ENCODE measurements at regions of chr5 and their contacts with region 1.

Region 1: DNA sequence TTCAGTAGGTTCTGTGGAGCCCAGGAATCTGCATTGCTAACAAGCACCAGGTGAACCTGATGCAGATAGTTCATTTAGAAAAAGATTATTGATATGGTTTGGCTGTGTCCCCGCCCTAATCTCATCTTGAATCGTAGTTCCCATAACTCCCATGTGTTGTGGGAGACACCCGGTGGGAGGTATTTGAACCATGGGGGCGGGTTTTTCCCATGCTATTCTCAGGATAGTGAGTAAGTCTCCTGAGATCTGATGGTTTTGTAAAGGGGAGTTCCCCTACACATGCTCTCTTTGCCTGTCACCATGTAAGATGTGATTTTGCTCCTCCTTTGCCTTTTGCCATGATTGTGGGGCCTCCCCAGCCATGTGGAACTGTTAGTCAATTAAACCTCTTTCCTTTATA is 212.0 kb downstream of the RAB3C start:
- DNase-seq: no peak
- H3K4me3 Mint-ChIP-seq: no peak overlapping the region
- H3K27ac Mint-ChIP-seq: no peak overlapping the region
- H3K4me1 Mint-ChIP-seq: peaks cover 4% of the 10 kb centered on the region
- H3K27me3 Mint-ChIP-seq: peaks cover 4% of the 10 kb centered on the region

Region 2: DNA sequence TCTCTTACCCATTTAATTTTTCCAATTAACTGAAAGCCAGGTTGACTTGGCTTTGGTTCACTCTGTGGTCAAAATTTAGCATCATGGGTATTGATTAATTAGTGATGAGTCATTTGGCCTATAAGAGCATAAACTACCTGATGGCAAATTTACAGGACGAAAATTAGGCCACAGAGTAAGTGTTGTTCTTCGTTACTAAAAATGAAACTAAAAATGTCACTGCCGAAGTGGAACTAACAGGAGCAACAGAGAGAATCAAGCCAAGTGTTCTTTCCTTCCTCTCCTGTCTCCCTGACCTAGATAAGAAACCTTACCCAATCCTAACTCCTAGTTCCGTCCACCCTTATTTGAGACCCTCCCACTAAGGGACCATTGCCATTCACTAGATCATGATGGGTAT is 35.1 kb before region 1 on chr5:
- intact Hi-C with region 1: loop called (anchors 5 kb)
- DNase-seq: no peak
- H3K4me3 Mint-ChIP-seq: peak overlapping the region; percentile 68
- H3K27ac Mint-ChIP-seq: no peak overlapping the region
- H3K4me1 Mint-ChIP-seq: peaks cover 27% of the 10 kb centered on the region
- H3K27me3 Mint-ChIP-seq: peaks cover 3% of the 10 kb centered on the region